ENCODE measurements at regions of chr11 and their contacts with region 1.

Region 1: GRCh38 chr11:74443071-74443864 is 24.1 kb downstream of the KCNE3 start:
- DNase-seq: peak; percentile 94
- ATAC-seq: peak; percentile 81
- H3K4me3 ChIP-seq: no peak overlapping the region
- H3K27ac ChIP-seq: peak overlapping the region; percentile 77
- H3K4me1 ChIP-seq: peaks cover 18% of the 10 kb centered on the region
- H3K27me3 ChIP-seq: no peaks in the 10 kb centered on the region
- CTCF ChIP-seq: peak; percentile 87

Region 2: GRCh38 chr11:74321487-74322188 is 121.6 kb before region 1 on chr11:
- CTCF ChIA-PET with region 1: interaction called, 3 read pairs
- POLR2A ChIA-PET with region 1: no interaction called
- intact Hi-C with region 1: loop called (anchors 2 kb)
- DNase-seq: peak; percentile 77
- ATAC-seq: peak; percentile 60
- H3K4me3 ChIP-seq: no peak overlapping the region; the same call in 1 of the 2 replicates
- H3K27ac ChIP-seq: peak overlapping the region; percentile 56
- H3K4me1 ChIP-seq: peaks cover 33% of the 10 kb centered on the region
- H3K27me3 ChIP-seq: no peaks in the 10 kb centered on the region
- CTCF ChIP-seq: peak; percentile 92

Region 3: DNA sequence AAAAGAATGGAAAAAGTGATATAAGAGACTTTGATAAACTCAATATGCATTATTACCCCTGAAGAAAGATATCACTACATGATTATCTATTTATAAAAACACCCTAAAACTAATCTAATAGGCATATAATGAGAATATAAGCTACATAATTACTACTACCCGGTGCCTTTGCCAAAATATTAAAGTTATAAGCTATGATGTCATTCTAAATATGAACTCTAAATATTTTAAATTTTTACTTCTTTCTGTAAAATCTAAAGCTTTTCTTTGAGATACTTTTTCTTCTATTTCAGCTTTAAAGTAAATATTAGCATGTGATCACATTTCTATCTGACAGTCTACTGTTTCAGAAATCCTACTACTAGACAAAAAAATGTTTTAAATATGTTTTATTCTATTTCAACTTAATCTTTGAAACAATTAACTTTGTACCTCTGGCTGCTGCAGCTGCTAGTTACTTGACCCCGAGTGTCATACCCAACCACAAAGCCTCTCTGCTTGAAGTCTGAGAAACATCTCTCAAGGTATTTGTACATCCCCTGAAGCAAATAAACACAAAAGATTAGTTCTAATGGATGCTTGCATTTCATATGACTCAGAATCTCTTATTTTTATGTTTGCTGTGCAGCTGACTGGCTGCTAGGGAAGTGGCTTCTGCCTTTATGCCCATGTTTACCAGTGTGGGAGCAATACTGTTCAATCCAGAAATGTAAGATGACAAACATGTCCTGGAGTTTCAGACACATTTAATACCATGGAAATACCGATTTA is 71.8 kb before region 1 on chr11:
- CTCF ChIA-PET with region 1: no interaction called
- POLR2A ChIA-PET with region 1: no interaction called
- intact Hi-C with region 1: loop called (anchors 5 kb)
- DNase-seq: peak; percentile 94
- ATAC-seq: peak; percentile 99
- H3K4me3 ChIP-seq: no peak overlapping the region
- H3K27ac ChIP-seq: peak overlapping the region; percentile 78
- H3K4me1 ChIP-seq: peaks cover 28% of the 10 kb centered on the region
- H3K27me3 ChIP-seq: no peaks in the 10 kb centered on the region
- CTCF ChIP-seq: no peak

Region 4: DNA sequence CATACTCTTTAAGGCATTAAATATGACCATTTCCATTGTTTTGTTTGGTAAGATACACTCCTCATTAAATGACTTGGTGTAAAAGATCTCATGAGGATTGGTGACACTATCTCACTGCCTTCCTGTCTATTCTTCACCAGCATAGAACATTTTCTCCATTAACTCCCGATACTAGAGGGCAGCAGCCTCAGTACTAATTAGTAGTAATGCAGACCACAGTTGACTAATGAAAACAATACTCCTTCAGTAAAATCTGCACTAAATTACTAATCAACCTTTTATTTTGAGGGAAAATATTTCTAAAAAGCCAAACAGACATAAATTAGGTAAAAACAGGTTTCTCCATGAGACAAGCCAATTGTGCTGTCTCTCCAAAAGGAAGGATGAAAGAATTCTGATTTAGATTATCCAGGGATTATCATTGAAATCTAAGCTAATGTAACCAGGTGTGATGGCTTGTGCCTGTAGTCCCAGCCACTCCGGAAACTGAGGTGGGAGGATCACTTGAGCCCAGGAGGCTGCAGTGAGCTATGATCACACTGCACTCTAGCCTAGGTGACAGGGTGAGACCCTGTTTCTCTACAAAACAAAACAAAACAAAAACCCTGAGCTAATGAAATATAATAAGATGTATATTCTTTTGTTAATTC is 54.5 kb before region 1 on chr11:
- CTCF ChIA-PET with region 1: interaction called, 10 read pairs
- POLR2A ChIA-PET with region 1: no interaction called
- intact Hi-C with region 1: loop called (anchors 1 kb)
- DNase-seq: peak; percentile 87
- ATAC-seq: peak; percentile 95
- H3K4me3 ChIP-seq: no peak overlapping the region
- H3K27ac ChIP-seq: no peak overlapping the region
- H3K4me1 ChIP-seq: peaks cover 4% of the 10 kb centered on the region
- H3K27me3 ChIP-seq: no peaks in the 10 kb centered on the region
- CTCF ChIP-seq: peak; percentile 98

Region 5: DNA sequence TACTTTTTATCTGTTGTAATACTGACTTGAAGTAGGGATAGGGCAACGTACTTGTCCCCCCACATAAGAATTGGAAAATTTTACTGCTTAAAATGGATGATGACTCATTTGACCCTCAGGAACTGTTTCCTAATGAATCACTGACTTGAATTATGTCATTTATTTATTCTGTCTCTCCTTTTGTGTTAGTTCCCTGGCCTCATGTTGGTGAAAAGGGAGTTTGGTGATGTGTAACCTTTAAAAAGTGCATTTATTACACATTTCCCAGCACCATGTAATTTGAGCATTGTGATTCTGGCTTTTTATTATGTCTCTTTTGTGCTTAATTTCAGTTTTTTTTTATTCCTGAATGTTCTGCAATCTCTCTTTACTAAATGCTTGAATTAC is 24.8 kb before region 1 on chr11:
- CTCF ChIA-PET with region 1: no interaction called
- POLR2A ChIA-PET with region 1: no interaction called
- intact Hi-C with region 1: loop called (anchors 2 kb)
- DNase-seq: peak; percentile 93
- ATAC-seq: peak; percentile 92
- H3K4me3 ChIP-seq: peak overlapping the region; percentile 19; the same call in 1 of the 2 replicates
- H3K27ac ChIP-seq: peak overlapping the region; percentile 90
- H3K4me1 ChIP-seq: peaks cover 37% of the 10 kb centered on the region
- H3K27me3 ChIP-seq: no peaks in the 10 kb centered on the region
- CTCF ChIP-seq: no peak

Measured in PC-3 (cell line).